H1 (cell line): ENCODE measurements at regions of chr16 and their contacts with region 1.

Region 1: GRCh38 chr16:25691519-25692091 is at the start of gene HS3ST4:
- DNase-seq: peak in 1 of 2 experiments; percentile 79
- H3K4me3 ChIP-seq: peak within 1 kb of the TSS; percentile 79 to 87 (median 84)
- H3K27ac ChIP-seq: no peak within 1 kb of the TSS
- H3K4me1 ChIP-seq: peaks cover 0 to 10% (median 4%) of the 10 kb centered on the region in 4 experiments; a peak in 5 of 7 replicates
- H3K27me3 ChIP-seq: peaks cover 3 to 26% (median 18%) of the 10 kb centered on the region in 4 experiments; a peak in 6 of 7 replicates
- CTCF ChIP-seq: no peak
- EP300 ChIP-seq: 0 out of 3 replicates have a peak, but pooled peaks of 1 of the 2 experiments have one; percentile 62
- POLR2A ChIP-seq: no peak
- RAD21 ChIP-seq: 0 out of 4 replicates have a peak, but pooled peaks of 1 of the 2 experiments have one; percentile 11
- total RNA-seq, gene HS3ST4: 3.3 and 3.8 TPM in 2 replicates

Region 2: DNA sequence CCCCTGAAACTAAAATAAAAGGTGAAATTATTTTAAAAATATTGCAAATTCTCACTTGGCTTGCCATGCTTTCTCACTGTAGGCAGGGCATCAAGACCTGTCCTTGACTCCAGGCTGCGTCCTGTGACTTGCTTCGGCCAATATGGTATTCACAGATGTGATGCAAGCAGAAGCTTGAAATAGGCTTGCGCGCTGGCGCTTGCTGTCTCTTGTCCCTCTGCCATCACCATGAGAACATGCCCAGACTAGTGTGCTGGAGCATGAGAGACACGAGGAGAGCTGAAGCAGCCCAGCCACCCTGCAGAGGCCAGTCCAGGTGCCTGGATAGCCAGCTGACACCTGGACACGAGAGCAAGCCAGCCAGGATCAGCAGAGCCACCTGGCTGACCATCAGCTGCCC is 412.1 kb before region 1 on chr16:
- CTCF ChIA-PET with region 1: interaction called, 13 read pairs
- POLR2A ChIA-PET with region 1: no interaction called
- DNase-seq: no peak
- H3K4me3 ChIP-seq: no peak overlapping the region
- H3K27ac ChIP-seq: no peak overlapping the region
- H3K4me1 ChIP-seq: no peaks in the 10 kb centered on the region
- H3K27me3 ChIP-seq: no peaks in the 10 kb centered on the region
- CTCF ChIP-seq: no peak
- EP300 ChIP-seq: no peak
- POLR2A ChIP-seq: no peak
- RAD21 ChIP-seq: no peak

Region 3: GRCh38 chr16:25643633-25644032 is 48.0 kb before region 1 on chr16:
- CTCF ChIA-PET with region 1: no interaction called
- POLR2A ChIA-PET with region 1: no interaction called
- DNase-seq: no peak
- H3K4me3 ChIP-seq: no peak overlapping the region
- H3K27ac ChIP-seq: no peak overlapping the region
- H3K4me1 ChIP-seq: no peaks in the 10 kb centered on the region
- H3K27me3 ChIP-seq: no peaks in the 10 kb centered on the region
- CTCF ChIP-seq: no peak
- EP300 ChIP-seq: no peak
- POLR2A ChIP-seq: no peak
- RAD21 ChIP-seq: no peak